ENCODE measurements at regions of chr3 and their contacts with region 1.

Region 1: DNA sequence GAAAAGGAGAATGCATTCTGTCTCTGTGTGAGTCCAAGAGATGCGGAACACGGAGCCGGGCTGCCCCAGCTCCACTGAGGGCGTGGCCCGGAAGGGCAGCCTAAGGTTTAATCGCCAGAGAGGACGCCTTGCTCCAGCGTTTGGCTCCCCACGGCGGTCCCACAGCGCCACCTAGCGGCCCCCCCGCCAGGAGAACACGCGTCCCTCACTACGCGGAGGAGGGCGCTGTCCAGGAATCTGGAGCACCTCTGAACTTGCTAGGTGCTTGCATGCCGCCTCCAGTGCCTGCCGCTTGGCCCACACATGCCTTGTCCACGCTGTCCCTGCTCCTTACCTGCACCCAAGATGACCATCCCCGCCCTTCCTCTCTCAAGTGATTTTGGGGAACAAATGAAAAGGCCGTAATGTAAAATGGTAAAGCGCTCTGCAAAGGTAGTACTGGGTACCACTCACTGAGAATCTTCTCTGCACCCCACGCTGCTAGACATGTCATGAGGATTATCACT is 14.4 kb upstream of the MRPS22 start:
- DNase-seq: peak; percentile 99
- H3K4me3 Mint-ChIP-seq: peak overlapping the region; percentile 12
- H3K27ac Mint-ChIP-seq: no peak overlapping the region
- H3K4me1 Mint-ChIP-seq: no peaks in the 10 kb centered on the region
- H3K27me3 Mint-ChIP-seq: peaks cover 47% of the 10 kb centered on the region
- CTCF ChIP-seq: peak; percentile 100

Region 2: GRCh38 chr3:138694287-138695007 is 635.0 kb before region 1 on chr3:
- CTCF ChIA-PET with region 1: no interaction called
- intact Hi-C with region 1: loop called (anchors 5 kb)
- DNase-seq: no peak
- H3K4me3 Mint-ChIP-seq: no peak overlapping the region
- H3K27ac Mint-ChIP-seq: no peak overlapping the region
- H3K4me1 Mint-ChIP-seq: peaks cover 13% of the 10 kb centered on the region
- H3K27me3 Mint-ChIP-seq: no peaks in the 10 kb centered on the region
- CTCF ChIP-seq: no peak

Region 3: DNA sequence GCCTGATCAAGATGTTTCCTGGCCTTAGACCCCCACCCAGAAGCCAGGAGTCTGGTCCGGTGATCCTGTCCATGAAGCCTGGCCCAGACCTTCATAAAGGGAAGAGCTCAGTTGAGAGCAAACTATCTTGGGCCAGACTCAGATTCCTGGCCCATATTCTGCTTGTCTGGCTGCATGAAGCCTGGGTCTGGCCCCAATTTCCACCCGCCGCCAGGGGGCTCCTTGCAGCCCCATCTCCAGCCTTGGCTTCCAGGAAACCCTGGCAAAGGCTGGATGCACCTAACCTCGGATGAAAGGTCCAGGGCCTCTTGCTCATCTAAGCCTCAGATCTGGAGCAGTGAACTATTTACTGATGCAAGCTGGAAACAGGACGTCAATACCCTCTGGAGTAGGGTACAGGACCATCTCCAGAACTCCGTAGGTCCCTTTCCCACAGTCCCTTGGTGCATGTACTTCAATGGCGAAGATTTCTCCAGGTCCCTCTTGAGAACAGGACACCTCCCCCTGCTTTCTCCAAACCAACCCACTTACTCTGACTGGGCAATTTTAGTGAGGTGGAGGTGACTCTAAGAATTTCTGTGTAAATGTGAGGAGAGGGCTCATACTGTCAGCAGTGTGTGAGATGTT is 388.0 kb before region 1 on chr3:
- CTCF ChIA-PET with region 1: interaction called, 14 read pairs
- intact Hi-C with region 1: loop called (anchors 1 kb)
- DNase-seq: peak; percentile 91
- H3K4me3 Mint-ChIP-seq: no peak overlapping the region
- H3K27ac Mint-ChIP-seq: no peak overlapping the region
- H3K4me1 Mint-ChIP-seq: peaks cover 31% of the 10 kb centered on the region
- H3K27me3 Mint-ChIP-seq: peaks cover 94% of the 10 kb centered on the region
- CTCF ChIP-seq: peak; percentile 93

Region 4: GRCh38 chr3:139267300-139268246 is 61.8 kb before region 1 on chr3:
- CTCF ChIA-PET with region 1: no interaction called
- intact Hi-C with region 1: no loop called
- DNase-seq: no peak
- H3K4me3 Mint-ChIP-seq: no peak overlapping the region
- H3K27ac Mint-ChIP-seq: no peak overlapping the region
- H3K4me1 Mint-ChIP-seq: no peaks in the 10 kb centered on the region
- H3K27me3 Mint-ChIP-seq: no peaks in the 10 kb centered on the region
- CTCF ChIP-seq: no peak

Region 5: DNA sequence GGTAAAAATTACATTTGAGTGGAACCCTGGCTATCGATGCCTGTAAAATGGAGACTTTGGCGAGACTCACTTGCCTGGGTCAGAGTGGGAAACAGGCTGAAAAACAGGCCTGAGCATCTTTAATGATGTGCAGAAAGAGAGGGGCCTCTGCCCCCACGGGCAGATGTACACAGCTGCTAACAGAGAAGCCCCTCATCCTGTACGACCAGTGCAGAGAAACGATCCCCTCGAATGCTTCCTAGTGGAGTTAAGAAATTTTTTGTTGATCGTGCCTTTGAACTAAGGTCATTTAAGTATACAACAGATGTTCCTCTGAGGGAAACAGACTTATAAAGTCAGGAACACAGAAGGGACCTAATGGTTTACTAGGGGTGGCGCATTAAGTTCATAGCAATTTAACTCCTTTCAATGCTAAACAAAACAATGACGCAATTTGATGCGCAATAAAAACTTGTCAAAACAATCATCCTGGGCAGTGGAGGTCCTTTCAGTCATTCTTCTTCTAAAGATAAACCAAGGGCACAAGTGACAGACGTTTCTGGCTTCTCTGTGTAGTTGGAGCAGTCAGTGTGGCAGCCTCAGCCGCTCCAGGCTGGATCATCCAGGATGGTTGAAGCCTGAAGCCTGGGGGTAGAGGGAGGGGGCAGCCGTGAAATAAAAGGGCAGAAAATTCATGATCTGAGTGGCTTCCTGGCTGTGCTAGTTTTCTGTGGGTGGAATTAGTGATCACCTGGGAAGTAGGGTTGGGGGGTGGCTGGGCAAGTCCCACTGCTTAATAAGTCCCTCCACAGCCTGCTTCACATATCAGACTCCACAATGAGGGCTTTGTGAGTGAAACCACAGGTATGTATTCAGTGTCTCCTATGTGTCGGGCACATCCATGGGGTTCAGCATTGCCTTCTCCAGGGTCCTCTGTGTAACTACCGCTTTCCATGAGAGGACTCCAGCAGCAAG is 36.4 kb before region 1 on chr3:
- CTCF ChIA-PET with region 1: interaction called, 4 read pairs
- intact Hi-C with region 1: loop called (anchors 2 kb)
- DNase-seq: peak; percentile 57
- H3K4me3 Mint-ChIP-seq: no peak overlapping the region
- H3K27ac Mint-ChIP-seq: peak overlapping the region; percentile 39
- H3K4me1 Mint-ChIP-seq: peaks cover 32% of the 10 kb centered on the region
- H3K27me3 Mint-ChIP-seq: no peaks in the 10 kb centered on the region
- CTCF ChIP-seq: no peak

Region 6: DNA sequence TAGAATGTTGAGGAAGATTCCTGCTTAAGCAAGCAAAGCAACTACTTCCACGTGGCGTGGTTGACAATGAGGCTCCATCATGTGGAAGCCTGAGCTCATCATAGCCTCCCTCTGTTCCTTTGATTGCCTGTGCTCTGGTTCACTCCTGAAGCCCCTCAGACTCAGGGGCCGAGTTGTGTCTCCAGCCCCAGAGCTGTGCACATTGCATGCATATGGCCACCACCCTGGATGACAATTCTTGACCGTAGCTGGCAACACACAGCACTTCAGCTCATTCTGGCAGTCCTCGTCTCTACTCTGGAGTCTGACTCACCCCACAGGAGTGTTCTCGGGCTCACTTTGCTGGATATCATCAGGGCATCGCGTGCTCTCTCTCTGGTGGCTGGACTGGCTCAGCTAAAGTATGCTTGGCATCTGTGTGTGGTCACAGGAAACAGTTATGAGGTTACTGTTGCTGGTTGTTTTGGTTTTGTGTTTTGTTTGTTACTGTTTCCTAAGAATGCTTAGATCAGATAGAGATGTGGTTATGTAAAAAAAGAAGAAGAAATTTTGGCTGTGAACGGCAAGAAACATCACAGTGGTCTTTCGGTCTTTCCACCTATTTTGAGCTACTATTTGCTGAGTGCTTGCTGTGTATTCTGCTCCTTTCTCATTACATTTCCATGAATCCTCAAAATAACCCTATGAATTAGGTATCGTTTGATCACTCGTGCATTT is 27.2 kb before region 1 on chr3:
- CTCF ChIA-PET with region 1: interaction called, 10 read pairs
- intact Hi-C with region 1: no loop called
- DNase-seq: peak; percentile 89
- H3K4me3 Mint-ChIP-seq: peak overlapping the region; percentile 4
- H3K27ac Mint-ChIP-seq: peak overlapping the region; percentile 71
- H3K4me1 Mint-ChIP-seq: peaks cover 69% of the 10 kb centered on the region
- H3K27me3 Mint-ChIP-seq: no peaks in the 10 kb centered on the region
- CTCF ChIP-seq: no peak